ENCODE measurements at regions of chr20 and their contacts with region 1.

Region 1: DNA sequence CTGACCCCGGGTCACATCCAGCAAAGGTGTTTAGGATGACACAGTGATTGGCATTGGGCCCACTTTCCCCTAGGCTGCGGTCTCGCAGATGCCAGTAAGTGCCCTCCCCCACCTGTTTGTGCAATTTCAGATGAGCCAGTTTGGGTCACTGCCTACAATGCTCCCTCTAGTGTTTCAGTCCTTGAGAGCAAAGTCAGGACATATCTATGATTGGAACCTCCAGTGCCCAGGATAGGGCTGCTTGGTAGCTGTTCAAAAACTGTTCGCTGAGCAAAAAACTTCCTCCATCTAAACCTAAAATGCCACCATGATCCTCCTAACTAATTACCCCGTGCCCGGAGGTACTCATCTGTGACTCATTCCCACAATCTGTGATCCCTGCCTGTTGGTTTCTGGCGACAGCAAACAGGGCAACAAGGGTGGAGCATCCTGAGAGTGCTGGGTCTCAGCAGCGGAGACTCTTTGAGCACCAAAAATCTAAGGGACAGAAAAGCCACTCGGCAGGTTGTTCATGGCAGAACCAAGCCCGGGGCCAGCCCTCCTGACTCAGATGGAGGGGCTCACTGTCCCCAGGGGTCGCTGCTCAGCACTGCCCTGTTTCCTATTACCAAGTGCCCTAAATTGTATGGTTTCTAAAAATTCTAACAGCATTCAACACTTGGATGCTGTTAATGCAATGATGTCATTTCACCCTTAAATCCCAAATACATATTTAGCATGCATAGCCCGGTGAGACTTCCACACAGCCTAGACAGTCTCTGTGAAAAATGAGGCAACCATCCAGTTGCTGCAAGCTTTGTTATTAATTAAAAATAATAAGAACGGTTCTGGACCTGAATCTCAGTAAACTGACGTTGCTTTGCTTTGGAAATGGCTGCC is 5.0 kb downstream of the VSX1 start:
- DNase-seq: no peak
- H3K4me3 ChIP-seq: peak overlapping the region in 3 of 4 donors; percentile 27 to 52 (median 31)
- H3K27ac ChIP-seq: no peak overlapping the region
- H3K4me1 ChIP-seq: peaks cover 10 to 29% (median 14%) of the 10 kb centered on the region in 3 donors
- H3K27me3 ChIP-seq: peaks cover 0 to 95% (median 30%) of the 10 kb centered on the region in 4 donors
- CTCF ChIP-seq: peak in 4 of 6 experiments; percentile 13 to 31 (median 19)
- POLR2A ChIP-seq: no peak

Region 2: DNA sequence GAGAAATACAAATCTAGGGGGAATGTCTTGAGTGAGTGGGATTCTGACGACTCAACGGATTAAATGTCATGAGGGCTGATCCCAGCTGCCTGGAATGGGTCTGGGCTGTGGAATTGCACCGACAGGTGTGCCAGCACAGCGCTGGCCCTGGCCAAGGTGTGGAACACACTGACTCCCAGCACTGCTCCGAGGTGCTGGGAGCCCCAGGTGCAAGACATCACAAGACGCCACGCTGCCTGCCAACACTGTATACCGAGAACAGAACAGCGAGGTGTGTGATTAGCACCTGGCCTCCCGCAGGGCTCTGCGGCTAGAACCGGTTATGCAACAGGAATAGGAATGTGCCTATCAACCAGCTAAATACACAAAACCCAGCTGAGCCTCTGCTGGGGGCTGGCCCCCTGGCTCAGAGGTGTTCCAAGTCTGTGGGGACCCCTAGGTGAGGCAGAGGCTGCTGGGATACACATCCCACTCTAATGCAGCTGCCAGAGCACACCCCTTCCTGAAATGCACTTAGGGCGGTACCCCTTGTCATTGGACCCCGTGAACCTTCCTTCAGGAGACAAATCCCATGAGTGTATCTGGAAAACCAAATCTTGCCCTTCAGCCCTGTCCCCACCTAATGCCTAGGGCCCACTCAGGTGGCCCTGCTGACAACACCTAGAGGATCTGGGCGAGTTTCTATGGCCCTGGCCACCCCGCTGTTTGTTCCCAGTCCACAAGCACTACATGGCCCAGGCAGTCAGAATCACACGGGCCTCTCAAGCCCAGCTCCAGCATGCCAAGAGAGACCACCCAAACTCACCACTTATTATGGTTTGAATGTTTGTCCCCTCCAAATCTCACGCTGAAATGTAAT is 59.5 kb before region 1 on chr20:
- intact Hi-C with region 1: no loop called
- DNase-seq: no peak
- H3K4me3 ChIP-seq: no peak overlapping the region
- H3K27ac ChIP-seq: peak overlapping the region; percentile 28 to 76 (median 56)
- H3K4me1 ChIP-seq: peaks cover 2 to 62% (median 24%) of the 10 kb centered on the region in 3 donors
- H3K27me3 ChIP-seq: no peaks in the 10 kb centered on the region
- CTCF ChIP-seq: peak in 1 of 6 experiments; percentile 12
- POLR2A ChIP-seq: no peak

Region 3: DNA sequence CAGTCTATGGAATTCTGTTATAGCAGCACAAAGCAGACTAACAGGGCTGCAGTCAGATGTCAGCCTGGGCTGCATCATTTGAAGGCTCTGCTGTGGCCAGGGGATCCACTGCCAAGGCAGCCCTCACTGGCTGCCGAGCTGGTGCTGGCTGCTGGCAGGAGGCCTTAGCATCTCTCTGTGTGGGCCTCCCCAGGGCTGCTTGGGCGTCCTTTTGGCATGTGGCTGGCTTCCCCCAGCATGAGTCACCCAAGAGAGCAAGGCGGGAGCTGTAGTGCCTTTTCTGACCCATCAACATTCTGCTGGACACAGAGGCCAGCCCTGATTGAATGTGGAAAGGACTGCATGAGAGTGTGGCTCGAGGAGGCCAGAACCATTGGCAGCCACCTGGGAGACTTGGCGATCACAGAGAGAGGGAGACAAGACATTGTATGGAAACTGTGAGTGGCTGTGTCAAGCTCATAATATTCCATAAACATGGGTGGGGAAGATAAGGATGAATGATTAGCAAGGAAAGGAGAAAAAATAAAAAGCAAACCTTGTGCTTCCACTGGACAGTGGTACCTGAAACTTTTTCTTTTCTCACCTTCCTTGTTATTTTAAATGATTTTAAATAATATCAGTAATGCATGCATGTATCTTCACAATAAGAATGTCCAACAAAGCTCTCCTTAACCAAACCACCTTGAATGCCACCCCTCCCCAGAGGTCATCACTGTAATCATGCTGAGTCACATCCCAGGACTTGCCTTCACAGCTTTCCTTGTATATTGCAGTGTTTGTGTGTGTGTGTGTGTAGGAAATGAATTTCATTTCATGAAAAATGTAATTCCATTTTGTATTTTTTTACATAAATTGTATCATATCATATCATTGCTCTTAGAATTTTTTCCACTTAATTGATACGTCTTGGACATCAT is 59.9 kb after region 1 on chr20:
- intact Hi-C with region 1: no loop called
- DNase-seq: no peak
- H3K4me3 ChIP-seq: no peak overlapping the region
- H3K27ac ChIP-seq: no peak overlapping the region
- H3K4me1 ChIP-seq: peaks cover 0 to 7% (median 0%) of the 10 kb centered on the region in 3 donors
- H3K27me3 ChIP-seq: peaks cover 0 to 25% (median 0%) of the 10 kb centered on the region in 4 donors
- CTCF ChIP-seq: no peak
- POLR2A ChIP-seq: no peak

Region 4: GRCh38 chr20:25178563-25179438 is 101.8 kb after region 1 on chr20:
- intact Hi-C with region 1: loop called (anchors 10 kb)
- DNase-seq: no peak
- H3K4me3 ChIP-seq: no peak overlapping the region
- H3K27ac ChIP-seq: peak overlapping the region in 3 of 4 donors; percentile 8 to 52 (median 47)
- H3K4me1 ChIP-seq: peaks cover 3 to 25% (median 12%) of the 10 kb centered on the region in 3 donors
- H3K27me3 ChIP-seq: no peaks in the 10 kb centered on the region
- CTCF ChIP-seq: peak; percentile 41 to 85 (median 64)
- POLR2A ChIP-seq: no peak

Measured in esophagus squamous epithelium (tissue), 5 donors.